GM12878 (cell line): ENCODE measurements at regions of chr9 and their contacts with region 1.

Region 1: DNA sequence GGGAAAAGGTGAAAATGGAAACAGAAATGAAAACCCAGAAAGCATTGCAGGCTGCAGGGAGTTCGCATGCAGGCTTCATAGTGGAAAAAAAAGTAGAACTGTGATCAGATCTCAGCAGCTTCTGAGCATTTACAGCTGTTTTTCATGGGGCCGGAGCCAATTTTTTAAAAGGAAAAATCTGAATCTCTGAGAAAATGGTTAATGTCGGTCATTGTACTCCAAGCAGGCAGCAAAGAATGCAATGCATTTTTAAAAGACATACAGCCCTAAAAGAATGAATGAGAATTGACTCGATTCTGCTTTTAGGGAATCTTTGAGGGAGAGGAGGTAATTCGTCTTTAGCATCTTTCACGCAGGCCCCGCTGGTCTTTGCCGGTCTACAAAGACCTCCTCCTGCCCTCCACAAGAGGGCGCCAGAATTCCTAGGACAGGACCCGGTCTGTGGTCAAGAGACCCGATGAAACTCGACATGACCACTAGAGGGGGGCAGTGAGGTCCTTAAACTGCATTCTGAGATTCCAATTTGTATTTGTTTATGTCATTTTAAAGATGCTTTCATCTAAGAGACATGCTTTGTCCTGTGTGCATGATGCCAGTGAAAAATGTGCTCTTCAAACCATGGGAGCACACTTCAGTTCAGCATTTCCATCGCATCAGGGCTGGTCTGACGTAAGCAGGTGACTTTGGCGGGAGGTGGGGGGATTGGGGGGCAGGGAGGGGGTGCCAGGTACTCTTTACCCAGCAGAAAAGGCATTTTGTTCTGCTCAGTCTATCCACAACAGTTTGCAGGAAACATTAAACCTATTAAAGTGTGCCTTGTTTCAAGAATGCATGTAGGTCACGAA is 43.7 kb upstream of the TMEM252 start:
- DNase-seq: peak; percentile 58
- ATAC-seq: peak; percentile 100
- H3K4me3 ChIP-seq: no peak overlapping the region
- H3K27ac ChIP-seq: no peak overlapping the region
- H3K4me1 ChIP-seq: no peaks in the 10 kb centered on the region
- H3K27me3 ChIP-seq: no peaks in the 10 kb centered on the region
- CTCF ChIP-seq: peak; percentile 99 to 100 (median 100); a peak in 5 of 6 replicates
- EP300 ChIP-seq: no peak
- POLR2A ChIP-seq: no peak
- RAD21 ChIP-seq: peak; percentile 100

Region 2: DNA sequence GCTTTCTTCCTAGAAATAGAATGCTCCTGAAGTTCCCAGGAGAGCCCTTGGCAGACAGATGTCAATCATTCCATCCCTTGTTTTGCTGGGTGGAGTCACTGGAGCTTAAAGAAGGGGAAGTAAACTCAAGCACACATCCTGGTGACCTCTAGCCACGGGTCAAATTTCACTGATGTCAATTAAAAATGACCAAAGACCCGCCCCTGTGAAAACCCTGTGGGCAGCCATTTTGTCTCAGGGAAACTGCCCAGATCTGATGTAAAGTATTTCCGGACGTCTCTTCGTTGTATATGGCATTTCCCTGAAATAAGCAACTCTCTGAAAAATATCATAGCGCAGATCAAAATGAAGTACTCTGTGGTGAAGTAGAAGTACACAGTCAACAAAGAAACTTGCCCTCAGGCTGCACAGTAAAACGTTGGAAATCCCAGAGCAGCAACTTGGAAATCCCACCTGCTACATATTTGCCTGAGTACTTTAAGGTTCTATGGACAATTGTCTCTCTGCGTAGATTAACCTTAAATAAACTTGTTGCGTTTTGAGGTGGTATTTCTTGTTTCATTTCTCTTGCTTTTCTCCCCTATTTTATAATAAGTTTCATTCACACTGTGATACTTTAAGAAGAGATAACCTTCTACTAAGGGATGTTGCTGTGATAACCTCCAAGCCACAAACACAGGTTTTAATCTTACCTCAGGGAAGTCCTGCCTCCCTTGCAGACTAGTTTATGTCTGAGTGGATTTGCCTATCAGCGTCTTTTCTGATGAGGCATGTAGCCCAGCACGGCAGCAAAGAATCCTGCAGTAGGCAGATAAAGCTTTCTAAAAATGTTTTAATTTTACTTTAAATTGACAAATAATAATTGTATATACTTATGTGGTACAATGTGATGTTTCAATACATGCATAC is 59.7 kb after region 1 on chr9:
- CTCF ChIA-PET with region 1: no interaction called
- POLR2A ChIA-PET with region 1: no interaction called
- RAD21 ChIA-PET with region 1: no interaction called
- SMC1A ChIA-PET with region 1: interaction called, 4 read pairs
- in situ Hi-C with region 1: no loop called
- intact Hi-C with region 1: loop called (anchors 5 kb)
- DNase-seq: peak; percentile 63
- ATAC-seq: peak; percentile 83
- H3K4me3 ChIP-seq: peak overlapping the region; percentile 36; the same call in 1 of the 2 replicates
- H3K27ac ChIP-seq: peak overlapping the region; percentile 76
- H3K4me1 ChIP-seq: peaks cover 49% of the 10 kb centered on the region
- H3K27me3 ChIP-seq: no peaks in the 10 kb centered on the region
- CTCF ChIP-seq: no peak
- EP300 ChIP-seq: 0 out of 4 replicates have a peak, but pooled peaks have one; percentile 18 to 46
- POLR2A ChIP-seq: no peak
- RAD21 ChIP-seq: no peak

Region 3: DNA sequence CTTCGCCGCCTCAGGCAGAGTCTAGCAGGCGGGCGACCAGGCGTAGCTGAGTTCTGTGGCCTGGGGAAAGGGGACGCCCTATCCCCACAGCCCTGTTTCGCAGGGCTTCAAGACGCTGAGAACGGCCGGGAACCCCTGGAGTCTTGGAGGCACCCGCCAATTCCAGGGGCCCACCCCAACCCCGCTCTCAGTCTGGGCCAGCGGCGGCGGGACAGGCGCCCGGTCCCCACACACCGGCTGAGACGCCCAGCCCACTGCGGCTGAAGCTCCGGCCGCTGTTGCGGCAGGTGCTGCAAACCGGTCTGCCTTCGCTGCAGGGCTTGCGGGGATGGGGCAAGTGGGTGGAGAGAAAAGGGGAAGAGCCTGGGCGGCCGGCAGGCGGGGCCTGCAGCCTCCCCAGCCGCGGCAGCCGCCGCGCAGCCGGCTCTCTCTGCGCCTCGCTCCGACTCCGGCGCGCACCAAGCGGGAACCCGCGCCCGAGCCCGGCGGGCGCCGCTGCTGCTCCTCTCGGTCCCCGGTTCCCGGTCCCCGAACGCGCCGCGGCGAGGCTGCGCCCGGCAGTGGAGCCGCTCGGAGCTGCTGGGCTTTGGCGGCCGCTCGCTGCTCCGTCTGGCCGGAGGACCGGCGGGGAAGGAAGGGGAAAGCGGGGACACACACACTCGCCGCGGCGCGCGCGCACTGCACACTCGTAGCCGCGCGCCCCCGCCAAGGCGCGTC is 120.6 kb after region 1 on chr9 and contains the start of gene PIP5K1B:
- CTCF ChIA-PET with region 1: interaction called, 5 read pairs
- POLR2A ChIA-PET with region 1: no interaction called
- RAD21 ChIA-PET with region 1: no interaction called
- SMC1A ChIA-PET with region 1: interaction called, 6 read pairs
- in situ Hi-C with region 1: no loop called
- intact Hi-C with region 1: loop called (anchors 1 kb)
- DNase-seq: no peak
- ATAC-seq: peak; percentile 87
- H3K4me3 ChIP-seq: peak within 1 kb of the TSS; percentile 98
- H3K27ac ChIP-seq: peak within 1 kb of the TSS; percentile 72
- H3K4me1 ChIP-seq: peaks cover 28% of the 10 kb centered on the region
- H3K27me3 ChIP-seq: peaks cover 3 to 5% of the 10 kb centered on the region in 2 experiments
- CTCF ChIP-seq: 0 out of 6 replicates have a peak, but pooled peaks of 2 of the 3 experiments have one; percentile 2
- EP300 ChIP-seq: no peak
- POLR2A ChIP-seq: peak; percentile 59
- RAD21 ChIP-seq: no peak
- polyA plus RNA-seq, gene PIP5K1B: 6.8 to 10.9 TPM

Region 4: DNA sequence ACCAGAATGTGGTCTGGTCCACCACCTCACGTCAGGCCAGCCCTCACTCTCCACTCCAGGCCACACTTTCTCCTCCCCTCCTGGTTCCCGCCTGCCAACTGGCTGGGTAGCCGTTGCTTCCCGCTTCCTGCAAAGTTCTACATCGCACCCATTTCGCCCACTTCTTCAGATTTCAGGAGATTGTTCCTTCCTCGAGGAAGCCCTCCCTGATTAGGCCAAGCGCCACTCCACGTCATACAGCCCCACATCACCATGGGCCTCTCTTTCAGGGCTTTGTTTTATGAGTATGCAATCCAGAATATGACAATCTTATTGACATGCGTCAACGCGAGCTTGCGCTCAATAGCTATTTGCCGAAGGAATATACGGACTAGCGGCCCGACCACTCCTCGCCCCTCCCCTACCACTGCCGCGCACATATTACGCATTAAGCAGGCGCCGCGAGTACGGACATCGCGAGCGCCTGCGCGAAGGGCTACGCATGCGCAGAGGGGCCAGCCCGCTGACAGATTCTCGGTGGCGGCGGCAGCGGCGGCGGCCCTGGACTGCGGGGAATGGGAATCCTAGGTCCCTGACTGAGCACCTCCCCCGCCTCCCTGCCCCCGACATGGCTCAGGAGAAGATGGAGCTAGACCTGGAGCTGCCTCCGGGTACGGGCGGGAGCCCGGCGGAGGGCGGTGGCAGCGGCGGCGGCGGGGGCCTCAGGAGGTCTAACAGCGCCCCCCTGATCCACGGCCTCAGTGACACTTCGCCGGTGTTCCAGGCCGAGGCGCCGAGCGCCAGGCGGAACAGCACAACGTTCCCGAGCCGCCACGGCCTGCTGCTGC is 195.4 kb after region 1 on chr9:
- CTCF ChIA-PET with region 1: interaction called, 4 read pairs
- POLR2A ChIA-PET with region 1: no interaction called
- RAD21 ChIA-PET with region 1: no interaction called
- SMC1A ChIA-PET with region 1: interaction called, 3 read pairs
- in situ Hi-C with region 1: no loop called
- intact Hi-C with region 1: loop called (anchors 5 kb)
- DNase-seq: peak; percentile 77
- ATAC-seq: peak; percentile 90
- H3K4me3 ChIP-seq: peak overlapping the region; percentile 83
- H3K27ac ChIP-seq: peak overlapping the region; percentile 92
- H3K4me1 ChIP-seq: peaks cover 2% of the 10 kb centered on the region; the same call in 1 of the 2 replicates
- H3K27me3 ChIP-seq: no peaks in the 10 kb centered on the region
- CTCF ChIP-seq: peak; percentile 31 to 56 (median 38); a peak in 5 of 6 replicates
- EP300 ChIP-seq: no peak
- POLR2A ChIP-seq: peak; percentile 93
- RAD21 ChIP-seq: peak; percentile 37

Region 5: DNA sequence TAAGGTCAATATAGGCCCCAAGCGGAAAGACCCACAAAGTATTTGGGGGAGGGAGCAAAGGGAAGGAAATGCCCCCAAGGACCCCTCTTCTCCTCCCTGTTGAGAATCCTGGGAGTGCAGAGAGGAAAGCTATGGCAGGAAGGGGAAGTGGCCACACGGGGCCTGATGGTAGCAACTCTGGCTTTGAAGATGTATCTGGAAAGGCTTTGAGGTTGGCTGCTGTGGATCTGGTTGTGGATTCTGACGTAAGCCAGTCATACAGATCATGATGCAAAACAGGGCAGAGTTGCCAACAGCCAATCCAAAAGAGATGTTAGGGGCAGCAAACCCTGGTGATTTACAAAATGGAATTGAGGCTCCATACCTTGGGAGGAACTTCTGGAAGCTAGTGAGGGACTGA is 320.7 kb after region 1 on chr9:
- CTCF ChIA-PET with region 1: no interaction called
- POLR2A ChIA-PET with region 1: no interaction called
- RAD21 ChIA-PET with region 1: no interaction called
- SMC1A ChIA-PET with region 1: no interaction called
- in situ Hi-C with region 1: loop called (anchors 5 kb)
- intact Hi-C with region 1: no loop called
- DNase-seq: no peak
- ATAC-seq: no peak
- H3K4me3 ChIP-seq: no peak overlapping the region
- H3K27ac ChIP-seq: no peak overlapping the region
- H3K4me1 ChIP-seq: no peaks in the 10 kb centered on the region
- H3K27me3 ChIP-seq: no peaks in the 10 kb centered on the region
- CTCF ChIP-seq: no peak
- EP300 ChIP-seq: no peak
- POLR2A ChIP-seq: no peak
- RAD21 ChIP-seq: no peak

Region 6: GRCh38 chr9:69027355-69028096 is 443.1 kb after region 1 on chr9:
- CTCF ChIA-PET with region 1: interaction called, 3 read pairs
- POLR2A ChIA-PET with region 1: no interaction called
- RAD21 ChIA-PET with region 1: no interaction called
- SMC1A ChIA-PET with region 1: interaction called, 3 read pairs
- in situ Hi-C with region 1: no loop called
- intact Hi-C with region 1: loop called (anchors 5 kb)
- DNase-seq: peak; percentile 51
- ATAC-seq: peak; percentile 95
- H3K4me3 ChIP-seq: no peak overlapping the region
- H3K27ac ChIP-seq: no peak overlapping the region
- H3K4me1 ChIP-seq: peaks cover 6% of the 10 kb centered on the region
- H3K27me3 ChIP-seq: no peaks in the 10 kb centered on the region
- CTCF ChIP-seq: peak; percentile 76 to 83 (median 79)
- EP300 ChIP-seq: no peak
- POLR2A ChIP-seq: no peak
- RAD21 ChIP-seq: peak; percentile 74

Region 7: DNA sequence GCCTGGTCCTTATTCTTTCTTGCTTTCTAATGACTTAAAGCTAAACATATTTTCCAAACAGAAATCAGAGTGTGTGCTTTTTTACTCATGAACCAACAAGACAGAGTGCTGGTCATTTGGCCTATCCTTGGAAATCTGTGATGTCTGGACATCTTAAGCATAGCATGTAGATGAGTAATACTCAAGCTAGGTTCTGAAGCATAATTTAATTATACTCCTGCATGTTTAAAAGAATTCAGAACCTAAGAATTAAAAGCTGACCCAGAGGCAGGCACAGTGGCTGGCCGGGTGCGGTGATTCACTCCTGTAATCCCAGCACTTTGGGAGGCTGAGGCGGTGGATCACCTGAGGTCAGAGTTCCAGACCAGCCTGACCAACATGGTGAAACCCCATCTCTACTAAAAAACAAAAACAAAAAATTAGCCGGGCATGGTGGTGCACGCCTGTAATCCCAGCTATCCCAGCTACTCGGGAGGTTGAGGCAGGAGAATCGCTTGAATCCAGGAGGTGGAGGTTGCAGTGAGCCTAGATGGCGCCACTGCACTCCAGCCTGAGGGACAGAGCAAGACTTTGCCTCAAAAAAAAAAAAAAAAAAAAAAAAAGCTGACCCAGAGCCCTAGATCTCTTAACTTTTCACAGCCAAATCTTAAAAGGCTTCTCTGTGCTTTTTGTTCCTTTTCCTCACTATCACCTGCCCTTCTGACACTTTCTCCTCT is 573.5 kb after region 1 on chr9:
- CTCF ChIA-PET with region 1: no interaction called
- POLR2A ChIA-PET with region 1: no interaction called
- RAD21 ChIA-PET with region 1: no interaction called
- SMC1A ChIA-PET with region 1: no interaction called
- in situ Hi-C with region 1: no loop called
- intact Hi-C with region 1: no loop called
- DNase-seq: no peak
- ATAC-seq: no peak
- H3K4me3 ChIP-seq: no peak overlapping the region
- H3K27ac ChIP-seq: no peak overlapping the region
- H3K4me1 ChIP-seq: peaks cover 5% of the 10 kb centered on the region; the same call in 1 of the 2 replicates
- H3K27me3 ChIP-seq: no peaks in the 10 kb centered on the region
- CTCF ChIP-seq: 0 out of 6 replicates have a peak, but pooled peaks of 1 of the 3 experiments have one; percentile 3
- EP300 ChIP-seq: no peak
- POLR2A ChIP-seq: no peak
- RAD21 ChIP-seq: no peak

Region 8: DNA sequence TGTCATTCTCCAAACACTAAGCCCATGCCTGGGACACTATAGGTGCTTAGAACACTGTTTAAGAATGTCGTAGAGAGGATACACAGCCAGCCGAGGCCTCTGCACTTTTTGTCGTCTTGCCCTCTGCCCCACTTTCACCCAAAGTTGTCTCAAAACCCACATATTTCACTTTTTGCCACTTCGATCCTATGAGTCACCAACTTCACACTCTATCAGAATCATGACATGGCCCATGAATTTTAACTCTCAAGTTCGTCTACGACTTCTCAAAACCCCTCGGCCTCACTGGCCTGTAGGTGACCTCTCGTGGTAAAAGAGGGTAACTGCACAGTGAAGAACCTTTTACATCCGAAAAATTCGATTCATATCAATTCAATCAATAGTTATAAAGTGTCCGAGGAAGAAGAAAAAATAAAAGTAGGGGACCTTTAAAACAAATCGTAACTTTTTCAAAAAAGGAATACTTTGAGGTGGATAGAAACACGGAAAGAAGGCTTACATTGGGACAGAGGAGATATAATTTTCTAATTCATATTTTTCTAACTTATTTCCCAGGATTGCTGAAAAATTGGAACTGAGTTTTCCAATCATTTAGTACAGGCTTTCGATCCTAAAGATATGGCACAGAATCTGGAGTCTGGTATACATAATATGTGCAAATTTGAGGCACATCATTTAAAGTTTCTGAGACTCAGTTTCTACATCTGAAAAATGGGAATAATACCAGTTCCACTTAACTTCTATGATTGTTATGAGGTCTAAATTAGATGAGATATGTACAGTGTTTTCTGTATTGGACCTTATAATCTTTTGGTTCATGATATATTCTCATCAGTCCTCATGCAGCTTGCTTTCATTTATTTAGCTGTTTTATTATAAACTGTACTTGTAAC is 965.1 kb after region 1 on chr9:
- CTCF ChIA-PET with region 1: no interaction called
- POLR2A ChIA-PET with region 1: no interaction called
- RAD21 ChIA-PET with region 1: no interaction called
- SMC1A ChIA-PET with region 1: no interaction called
- in situ Hi-C with region 1: no loop called
- intact Hi-C with region 1: no loop called
- DNase-seq: no peak
- ATAC-seq: peak; percentile 67
- H3K4me3 ChIP-seq: no peak overlapping the region
- H3K27ac ChIP-seq: no peak overlapping the region
- H3K4me1 ChIP-seq: no peaks in the 10 kb centered on the region
- H3K27me3 ChIP-seq: peaks cover 2 to 3% of the 10 kb centered on the region in 2 experiments; a peak in 2 of 4 replicates
- CTCF ChIP-seq: peak; percentile 75 to 80 (median 78)
- EP300 ChIP-seq: no peak
- POLR2A ChIP-seq: no peak
- RAD21 ChIP-seq: peak; percentile 82